Breast epithelium (tissue), 4 donors: ENCODE measurements at regions of chr1 and their contacts with region 1.

Region 1: GRCh38 chr1:60950224-60951063 is 131.9 kb upstream of the NFIA start:
- DNase-seq: no peak
- H3K4me3 ChIP-seq: no peak overlapping the region
- H3K27ac ChIP-seq: no peak overlapping the region
- H3K4me1 ChIP-seq: no peaks in the 10 kb centered on the region
- H3K27me3 ChIP-seq: no peaks in the 10 kb centered on the region
- CTCF ChIP-seq: no peak
- POLR2A ChIP-seq: no peak

Region 2: DNA sequence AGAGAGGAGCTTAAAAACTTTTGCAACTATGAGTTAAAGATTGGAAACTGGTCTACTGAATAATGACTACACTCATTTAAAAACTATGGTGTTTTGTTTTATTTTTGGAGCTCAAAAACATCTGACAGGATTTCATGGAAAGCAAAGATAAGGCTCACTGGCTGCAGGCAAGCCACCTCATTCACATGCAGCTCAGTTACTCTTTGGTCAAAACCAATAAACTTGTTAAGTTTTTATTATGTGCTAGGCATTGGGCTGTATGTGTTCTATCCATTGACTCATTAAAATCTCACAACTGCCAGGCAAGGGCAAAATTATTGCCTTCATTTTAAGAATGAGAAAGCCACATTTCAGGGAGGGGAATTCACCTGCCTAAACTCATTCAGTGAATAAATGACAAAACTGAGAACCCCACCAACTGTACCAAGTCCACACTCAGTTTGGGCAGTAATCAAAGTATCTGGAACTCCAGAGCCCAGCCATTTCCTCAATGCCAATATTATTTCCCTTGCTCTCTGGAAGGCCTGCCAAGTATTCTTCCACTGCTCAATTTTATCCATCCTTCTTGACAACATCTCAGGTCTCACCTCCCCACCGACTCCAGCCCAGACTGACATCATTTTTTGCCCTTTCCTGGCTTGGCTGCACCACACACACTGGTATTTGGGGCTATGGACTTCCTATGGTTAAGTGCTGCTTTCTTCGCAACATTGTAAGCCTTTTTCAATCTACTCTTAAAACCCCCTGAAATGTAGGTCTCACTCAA is 269.2 kb before region 1 on chr1:
- intact Hi-C with region 1: loop called (anchors 5 kb)
- DNase-seq: no peak
- H3K4me3 ChIP-seq: no peak overlapping the region
- H3K27ac ChIP-seq: no peak overlapping the region
- H3K4me1 ChIP-seq: no peaks in the 10 kb centered on the region
- H3K27me3 ChIP-seq: no peaks in the 10 kb centered on the region
- CTCF ChIP-seq: no peak
- POLR2A ChIP-seq: no peak

Region 3: DNA sequence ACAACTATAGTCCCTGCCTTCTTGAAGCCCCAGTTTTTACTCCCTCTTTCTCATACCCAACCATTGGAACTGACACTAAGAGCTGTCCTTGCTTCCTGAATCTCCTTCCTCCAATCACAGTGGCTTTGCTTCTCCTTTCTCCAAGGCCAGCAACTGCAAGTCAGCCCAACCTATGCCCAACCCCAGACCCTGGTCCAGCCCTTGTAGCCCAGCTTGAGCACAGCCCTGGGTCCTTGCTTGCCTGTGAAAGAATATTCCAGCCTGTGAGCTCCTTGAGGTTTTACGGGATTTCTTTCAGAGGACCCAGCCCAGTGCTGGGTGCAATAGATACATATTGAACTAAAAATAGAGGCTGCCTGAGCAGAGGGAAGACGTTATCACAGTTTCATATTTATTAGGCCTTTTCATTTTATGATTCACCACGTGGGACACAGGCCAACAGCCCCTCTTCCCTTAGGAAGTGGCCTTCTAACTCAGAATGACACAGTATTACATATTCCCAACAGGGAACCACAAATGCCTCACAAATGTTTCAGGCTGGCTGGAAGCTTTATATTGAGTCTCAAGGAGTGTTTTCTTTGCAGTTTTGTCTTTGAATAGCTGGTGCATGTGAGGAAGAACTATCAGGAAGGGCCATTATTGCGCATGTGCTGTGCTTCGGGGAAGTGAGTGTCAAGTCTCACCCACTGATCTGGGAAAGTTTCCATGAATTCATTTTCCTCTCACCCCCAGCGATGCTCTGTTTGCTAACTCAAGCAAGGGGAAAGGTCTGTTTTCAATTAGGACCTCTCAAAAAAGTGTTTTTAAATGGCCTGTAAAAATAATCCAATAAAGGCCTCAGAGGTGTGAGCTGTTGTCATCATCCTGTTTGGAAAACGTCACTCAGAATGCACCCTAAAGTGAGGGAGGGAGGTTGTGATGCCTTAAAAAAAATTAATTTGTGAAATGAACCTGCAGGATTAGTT is 39.6 kb after region 1 on chr1:
- intact Hi-C with region 1: no loop called
- DNase-seq: no peak
- H3K4me3 ChIP-seq: peak overlapping the region in 1 of 3 donors; percentile 27
- H3K27ac ChIP-seq: peak overlapping the region; percentile 67 to 90
- H3K4me1 ChIP-seq: no peaks in the 10 kb centered on the region
- H3K27me3 ChIP-seq: no peaks in the 10 kb centered on the region
- CTCF ChIP-seq: no peak
- POLR2A ChIP-seq: no peak

Region 4: GRCh38 chr1:61017651-61018050 is 67.2 kb after region 1 on chr1:
- intact Hi-C with region 1: no loop called
- DNase-seq: no peak
- H3K4me3 ChIP-seq: no peak overlapping the region
- H3K27ac ChIP-seq: no peak overlapping the region
- H3K4me1 ChIP-seq: no peaks in the 10 kb centered on the region
- H3K27me3 ChIP-seq: no peaks in the 10 kb centered on the region
- CTCF ChIP-seq: no peak
- POLR2A ChIP-seq: no peak